OCI-LY7 (cell line): ENCODE measurements at regions of chr12 and their contacts with region 1.

Region 1: GRCh38 chr12:10613349-10614055 is at the start of gene MAGOHB:
- DNase-seq: peak; percentile 97
- H3K4me3 ChIP-seq: peak within 1 kb of the TSS; percentile 91
- H3K27ac ChIP-seq: peak within 1 kb of the TSS; percentile 60
- H3K4me1 ChIP-seq: peaks cover 21% of the 10 kb centered on the region
- CTCF ChIP-seq: no peak
- total RNA-seq, gene MAGOHB: 35.6 and 44.4 TPM in 2 replicates

Region 2: GRCh38 chr12:10320643-10321042 is 292.9 kb before region 1 on chr12:
- CTCF ChIA-PET with region 1: no interaction called
- POLR2A ChIA-PET with region 1: interaction called, 11 read pairs
- intact Hi-C with region 1: no loop called
- DNase-seq: no peak
- H3K4me3 ChIP-seq: no peak overlapping the region
- H3K27ac ChIP-seq: no peak overlapping the region
- H3K4me1 ChIP-seq: no peaks in the 10 kb centered on the region
- CTCF ChIP-seq: no peak

Region 3: GRCh38 chr12:10910380-10910779 is 296.9 kb after region 1 on chr12:
- CTCF ChIA-PET with region 1: no interaction called
- POLR2A ChIA-PET with region 1: no interaction called
- intact Hi-C with region 1: no loop called
- DNase-seq: no peak
- H3K4me3 ChIP-seq: no peak overlapping the region
- H3K27ac ChIP-seq: no peak overlapping the region
- H3K4me1 ChIP-seq: no peaks in the 10 kb centered on the region
- CTCF ChIP-seq: no peak